HepG2 (cell line): ENCODE measurements at regions of chr1 and their contacts with region 1.

Region 1: DNA sequence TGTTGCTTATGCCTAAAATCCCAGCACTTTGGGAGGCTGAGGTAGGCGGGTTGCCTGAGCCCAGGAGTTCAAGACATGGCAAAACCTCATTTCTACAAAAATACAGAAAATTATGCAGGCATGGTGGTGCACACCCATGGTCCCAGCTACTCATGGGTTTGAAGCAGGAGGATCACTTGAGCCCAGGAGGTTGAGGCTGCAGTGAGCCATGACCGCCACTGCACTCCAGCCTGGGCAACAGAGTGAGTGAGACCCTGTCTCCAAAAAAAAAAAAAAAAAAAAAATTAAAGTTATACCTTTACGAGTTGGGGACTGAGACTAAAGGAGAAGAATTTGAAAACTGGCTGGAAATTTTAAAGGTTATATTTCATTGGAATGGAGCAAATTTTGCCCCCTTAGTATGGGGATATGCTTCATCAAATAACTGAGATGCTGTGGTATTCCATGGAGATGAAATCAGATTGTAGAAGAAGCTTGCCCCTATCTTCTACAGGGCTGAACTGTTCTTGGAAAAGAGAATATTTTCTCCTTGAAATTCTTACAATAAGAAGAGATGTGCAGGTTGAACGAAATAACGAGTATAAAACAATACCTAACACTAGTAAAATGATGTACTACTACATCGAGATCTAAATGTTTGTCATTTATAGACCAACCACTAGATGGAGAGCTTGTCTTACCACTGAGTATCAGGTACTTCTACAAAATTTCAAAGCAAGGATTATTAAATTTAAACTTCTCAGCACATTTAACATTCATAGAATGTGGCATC is 34.9 kb upstream of the SCYL3 start:
- DNase-seq: peak; percentile 33
- ATAC-seq: peak; percentile 67; the same call in 2 of the 3 replicates
- H3K4me3 ChIP-seq: no peak overlapping the region
- H3K27ac ChIP-seq: no peak overlapping the region
- H3K4me1 ChIP-seq: no peaks in the 10 kb centered on the region
- H3K27me3 ChIP-seq: no peaks in the 10 kb centered on the region
- CTCF ChIP-seq: peak; percentile 68
- EP300 ChIP-seq: no peak
- POLR2A ChIP-seq: no peak
- RAD21 ChIP-seq: peak; percentile 60

Region 2: GRCh38 chr1:169814265-169814664 is 114.4 kb before region 1 on chr1:
- CTCF ChIA-PET with region 1: no interaction called
- POLR2A ChIA-PET with region 1: no interaction called
- in situ Hi-C with region 1: no loop called
- intact Hi-C with region 1: no loop called
- DNase-seq: no peak
- ATAC-seq: no peak
- H3K4me3 ChIP-seq: no peak overlapping the region
- H3K27ac ChIP-seq: no peak overlapping the region
- H3K4me1 ChIP-seq: no peaks in the 10 kb centered on the region
- H3K27me3 ChIP-seq: no peaks in the 10 kb centered on the region
- CTCF ChIP-seq: no peak
- EP300 ChIP-seq: no peak
- POLR2A ChIP-seq: no peak
- RAD21 ChIP-seq: no peak

Region 3: GRCh38 chr1:170010443-170010842 is 81.8 kb after region 1 on chr1:
- CTCF ChIA-PET with region 1: no interaction called
- POLR2A ChIA-PET with region 1: no interaction called
- in situ Hi-C with region 1: no loop called
- intact Hi-C with region 1: no loop called
- DNase-seq: peak; percentile 44
- ATAC-seq: no peak
- H3K4me3 ChIP-seq: no peak overlapping the region
- H3K27ac ChIP-seq: no peak overlapping the region
- H3K4me1 ChIP-seq: no peaks in the 10 kb centered on the region
- H3K27me3 ChIP-seq: no peaks in the 10 kb centered on the region; a peak in 1 of 5 replicates
- CTCF ChIP-seq: peak; percentile 48
- EP300 ChIP-seq: no peak
- POLR2A ChIP-seq: no peak
- RAD21 ChIP-seq: no peak

Region 4: DNA sequence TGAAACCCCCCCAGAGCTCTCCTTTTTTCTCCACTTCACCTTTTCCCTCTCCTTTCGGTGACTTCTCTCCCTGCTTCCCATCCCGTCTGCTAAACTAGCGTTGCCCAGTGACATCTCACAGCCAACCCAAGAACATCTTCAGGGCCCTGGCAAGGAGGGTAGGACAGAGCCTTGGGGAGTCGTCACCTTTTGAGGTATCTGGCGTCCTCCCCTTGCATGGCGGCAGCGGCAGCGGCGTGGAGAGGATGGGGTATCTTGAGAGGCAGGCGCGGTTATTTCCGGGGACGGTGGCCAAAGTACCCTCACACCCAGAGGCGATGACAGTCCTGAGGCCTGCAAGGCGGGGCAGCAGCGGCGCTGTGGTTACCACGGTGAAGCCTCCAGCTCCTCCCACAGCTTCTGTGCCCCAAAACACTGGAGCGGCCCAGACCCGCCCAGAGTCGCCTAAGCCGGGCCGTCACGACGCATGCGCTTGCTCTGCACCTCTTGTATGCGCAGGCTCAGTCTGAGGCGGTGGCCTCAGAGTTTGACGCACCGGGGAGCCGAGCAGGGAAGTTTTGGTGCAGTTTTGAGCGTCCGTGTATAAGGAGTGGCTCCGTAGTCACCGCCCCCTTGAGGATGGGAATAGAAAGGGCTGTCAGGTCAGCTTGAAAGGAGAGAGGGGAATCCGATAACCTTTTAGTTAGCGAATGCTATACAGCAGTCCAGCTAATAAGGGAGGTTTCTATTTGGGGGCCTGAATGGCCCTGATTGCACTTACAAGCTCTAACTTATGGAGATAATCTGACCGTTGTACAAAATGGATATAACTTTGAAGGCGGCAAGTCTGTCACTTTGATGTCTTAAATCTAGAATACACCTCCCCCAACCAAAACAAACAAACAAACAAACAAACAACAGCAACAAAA is 145.9 kb after region 1 on chr1 and contains the start of gene KIFAP3:
- CTCF ChIA-PET with region 1: interaction called, 5 read pairs
- POLR2A ChIA-PET with region 1: no interaction called
- in situ Hi-C with region 1: no loop called
- intact Hi-C with region 1: loop called (anchors 5 kb)
- DNase-seq: peak; percentile 97
- ATAC-seq: peak; percentile 99
- H3K4me3 ChIP-seq: peak within 1 kb of the TSS; percentile 68 to 91 (median 80)
- H3K27ac ChIP-seq: peak within 1 kb of the TSS; percentile 53
- H3K4me1 ChIP-seq: peaks cover 15% of the 10 kb centered on the region
- H3K27me3 ChIP-seq: no peaks in the 10 kb centered on the region; a peak in 1 of 5 replicates
- CTCF ChIP-seq: peak; percentile 78
- EP300 ChIP-seq: no peak
- POLR2A ChIP-seq: peak in 1 of 2 experiments; percentile 40; a peak in 2 of 4 replicates
- RAD21 ChIP-seq: no peak
- total RNA-seq, gene KIFAP3: 10.0 and 13.1 TPM in 2 replicates

Region 5: GRCh38 chr1:170410401-170411166 is 482.0 kb after region 1 on chr1:
- CTCF ChIA-PET with region 1: no interaction called
- POLR2A ChIA-PET with region 1: no interaction called
- in situ Hi-C with region 1: no loop called
- intact Hi-C with region 1: no loop called
- DNase-seq: no peak
- ATAC-seq: no peak
- H3K4me3 ChIP-seq: no peak overlapping the region
- H3K27ac ChIP-seq: no peak overlapping the region
- H3K4me1 ChIP-seq: no peaks in the 10 kb centered on the region
- H3K27me3 ChIP-seq: no peaks in the 10 kb centered on the region
- CTCF ChIP-seq: no peak
- EP300 ChIP-seq: no peak
- POLR2A ChIP-seq: no peak
- RAD21 ChIP-seq: no peak

Region 6: DNA sequence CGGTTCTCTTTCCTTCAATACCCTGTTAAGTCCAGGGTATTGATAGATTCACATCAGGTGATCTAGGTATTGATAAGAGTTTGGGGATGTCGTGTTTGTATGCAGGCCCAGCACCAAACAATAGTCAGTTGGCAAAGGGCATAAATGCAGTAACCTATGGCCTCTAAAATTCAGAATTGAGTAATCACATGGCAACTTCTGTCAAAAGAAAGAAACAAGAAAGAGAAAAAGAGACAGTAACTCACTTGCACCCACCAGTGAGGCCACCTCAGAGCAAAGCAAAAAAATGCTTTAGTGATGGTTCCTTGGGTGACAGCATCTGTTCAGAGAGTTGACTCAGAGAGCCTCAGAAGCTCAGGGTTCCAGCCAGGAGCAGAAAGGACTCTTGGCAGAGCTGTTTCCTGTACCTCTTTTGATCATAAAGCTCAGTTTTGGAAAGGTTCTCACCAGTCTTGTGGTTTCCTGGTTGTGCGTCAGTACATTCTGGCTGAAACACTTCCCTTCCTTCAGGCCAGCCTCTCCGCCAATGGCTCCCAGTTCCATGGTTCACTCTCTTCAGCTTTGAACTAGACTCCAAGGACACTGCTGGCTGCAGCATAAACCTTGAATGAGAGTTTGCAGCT is 533.2 kb after region 1 on chr1:
- CTCF ChIA-PET with region 1: no interaction called
- POLR2A ChIA-PET with region 1: no interaction called
- in situ Hi-C with region 1: no loop called
- intact Hi-C with region 1: loop called (anchors 10 kb)
- DNase-seq: no peak
- ATAC-seq: no peak
- H3K4me3 ChIP-seq: no peak overlapping the region
- H3K27ac ChIP-seq: no peak overlapping the region
- H3K4me1 ChIP-seq: no peaks in the 10 kb centered on the region
- H3K27me3 ChIP-seq: no peaks in the 10 kb centered on the region
- CTCF ChIP-seq: no peak
- EP300 ChIP-seq: no peak
- POLR2A ChIP-seq: no peak
- RAD21 ChIP-seq: no peak

Region 7: GRCh38 chr1:170692866-170693575 is 764.4 kb after region 1 on chr1:
- CTCF ChIA-PET with region 1: no interaction called
- POLR2A ChIA-PET with region 1: no interaction called
- in situ Hi-C with region 1: no loop called
- intact Hi-C with region 1: loop called (anchors 1 kb)
- DNase-seq: no peak
- ATAC-seq: no peak
- H3K4me3 ChIP-seq: no peak overlapping the region
- H3K27ac ChIP-seq: no peak overlapping the region
- H3K4me1 ChIP-seq: no peaks in the 10 kb centered on the region
- H3K27me3 ChIP-seq: no peaks in the 10 kb centered on the region
- CTCF ChIP-seq: no peak
- EP300 ChIP-seq: no peak
- POLR2A ChIP-seq: no peak
- RAD21 ChIP-seq: no peak

Region 8: DNA sequence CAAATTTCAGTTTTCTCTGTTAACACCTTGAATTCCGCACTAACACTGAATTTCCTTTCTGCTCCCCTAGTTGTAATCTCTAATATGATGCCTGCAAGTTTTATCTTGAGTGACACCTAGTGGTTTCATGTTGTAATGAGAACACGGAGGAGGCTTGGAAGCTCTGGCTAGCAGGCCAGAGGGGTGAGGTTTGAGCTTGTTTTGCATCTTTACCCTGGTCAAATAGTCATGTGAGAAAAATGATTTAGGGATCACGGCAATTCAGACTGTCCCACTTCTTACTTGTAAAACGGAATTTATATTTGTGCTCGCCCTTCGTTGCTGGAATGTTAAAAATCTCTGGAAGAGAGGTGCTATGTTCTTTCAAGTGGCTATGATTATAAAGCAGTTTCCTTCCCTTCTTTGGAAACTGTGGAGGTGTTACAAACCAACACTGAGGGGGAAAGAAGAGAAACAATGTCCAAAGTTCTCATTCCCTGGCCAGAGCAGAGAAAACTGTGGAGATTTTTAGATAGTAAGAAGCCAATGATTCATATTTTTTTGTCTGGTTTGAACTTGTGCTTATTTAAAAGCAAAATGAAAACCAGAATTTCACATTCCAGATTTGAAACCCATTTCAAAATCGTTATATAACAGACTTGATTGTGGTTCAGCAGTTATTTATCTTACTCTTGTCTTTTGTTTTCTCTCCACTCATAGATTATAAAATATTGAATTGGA is 1001.4 kb after region 1 on chr1:
- CTCF ChIA-PET with region 1: interaction called, 8 read pairs
- POLR2A ChIA-PET with region 1: no interaction called
- in situ Hi-C with region 1: loop called (anchors 25 kb)
- intact Hi-C with region 1: loop called (anchors 1 kb)
- DNase-seq: peak; percentile 44
- ATAC-seq: peak; percentile 93
- H3K4me3 ChIP-seq: no peak overlapping the region
- H3K27ac ChIP-seq: no peak overlapping the region
- H3K4me1 ChIP-seq: no peaks in the 10 kb centered on the region
- H3K27me3 ChIP-seq: no peaks in the 10 kb centered on the region
- CTCF ChIP-seq: peak; percentile 77
- EP300 ChIP-seq: no peak
- POLR2A ChIP-seq: no peak
- RAD21 ChIP-seq: no peak